Calu3 (cell line): ENCODE measurements at regions of chr4 and their contacts with region 1.

Region 1: GRCh38 chr4:17957688-17958087 is 63.9 kb downstream of the LCORL start:
- DNase-seq: no peak
- H3K4me3 Mint-ChIP-seq: no peak overlapping the region
- H3K27ac Mint-ChIP-seq: no peak overlapping the region
- H3K4me1 Mint-ChIP-seq: no peaks in the 10 kb centered on the region
- H3K27me3 Mint-ChIP-seq: no peaks in the 10 kb centered on the region
- CTCF ChIP-seq: no peak

Region 2: GRCh38 chr4:17846266-17846665 is 111.4 kb before region 1 on chr4:
- CTCF ChIA-PET with region 1: no interaction called
- intact Hi-C with region 1: loop called (anchors 5 kb)
- DNase-seq: no peak
- H3K4me3 Mint-ChIP-seq: no peak overlapping the region
- H3K27ac Mint-ChIP-seq: no peak overlapping the region
- H3K4me1 Mint-ChIP-seq: no peaks in the 10 kb centered on the region
- H3K27me3 Mint-ChIP-seq: no peaks in the 10 kb centered on the region
- CTCF ChIP-seq: no peak